Transverse colon (tissue), 4 donors: ENCODE measurements at regions of chr20 and their contacts with region 1.

Region 1: DNA sequence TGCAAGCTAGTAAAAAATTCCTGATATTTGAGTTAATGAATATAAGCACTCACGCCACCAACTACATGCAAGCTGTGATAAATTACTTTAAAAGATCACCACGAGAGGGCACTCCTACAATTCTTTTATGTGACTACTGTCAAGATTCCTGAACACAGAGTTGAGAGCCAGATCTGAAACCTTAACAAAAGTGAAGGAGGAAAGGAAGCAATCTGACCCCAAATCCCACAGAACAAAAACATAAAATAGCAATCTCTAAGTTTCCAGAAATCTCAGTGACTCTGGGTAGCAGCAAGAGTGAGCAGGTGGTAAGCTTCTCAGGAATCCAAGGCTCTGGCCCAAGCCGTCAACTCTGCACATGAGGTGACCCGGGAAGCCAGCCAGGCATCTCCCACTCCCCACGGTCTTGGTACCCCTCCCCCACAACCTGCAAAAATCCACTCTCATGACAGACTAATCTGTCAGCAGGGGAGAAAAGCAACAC is 55.1 kb downstream of the STAU1 start:
- DNase-seq: no peak
- H3K4me3 ChIP-seq: no peak overlapping the region
- H3K27ac ChIP-seq: peak overlapping the region in 2 of 4 donors; percentile 9 to 11
- H3K4me1 ChIP-seq: peaks cover 0 to 7% (median 5%) of the 10 kb centered on the region in 4 donors
- H3K27me3 ChIP-seq: no peaks in the 10 kb centered on the region
- CTCF ChIP-seq: peak; percentile 54 to 67 (median 58)
- EP300 ChIP-seq: no peak
- POLR2A ChIP-seq: no peak

Region 2: GRCh38 chr20:49046087-49046900 is 86.7 kb before region 1 on chr20 and contains the start of gene CSE1L:
- in situ Hi-C with region 1: loop called in 1 of 4 experiments (anchors 25 kb)
- intact Hi-C with region 1: no loop called
- DNase-seq: peak; percentile 96
- H3K4me3 ChIP-seq: peak within 1 kb of the TSS; percentile 76 to 93 (median 92)
- H3K27ac ChIP-seq: peak within 1 kb of the TSS; percentile 94 to 98 (median 96)
- H3K4me1 ChIP-seq: peaks cover 0 to 22% (median 8%) of the 10 kb centered on the region in 4 donors
- H3K27me3 ChIP-seq: no peaks in the 10 kb centered on the region
- CTCF ChIP-seq: peak; percentile 20 to 86 (median 37)
- EP300 ChIP-seq: no peak
- POLR2A ChIP-seq: peak; percentile 88
- total RNA-seq, gene CSE1L: 11.5 to 27.0 (median 15.5) TPM

Region 3: DNA sequence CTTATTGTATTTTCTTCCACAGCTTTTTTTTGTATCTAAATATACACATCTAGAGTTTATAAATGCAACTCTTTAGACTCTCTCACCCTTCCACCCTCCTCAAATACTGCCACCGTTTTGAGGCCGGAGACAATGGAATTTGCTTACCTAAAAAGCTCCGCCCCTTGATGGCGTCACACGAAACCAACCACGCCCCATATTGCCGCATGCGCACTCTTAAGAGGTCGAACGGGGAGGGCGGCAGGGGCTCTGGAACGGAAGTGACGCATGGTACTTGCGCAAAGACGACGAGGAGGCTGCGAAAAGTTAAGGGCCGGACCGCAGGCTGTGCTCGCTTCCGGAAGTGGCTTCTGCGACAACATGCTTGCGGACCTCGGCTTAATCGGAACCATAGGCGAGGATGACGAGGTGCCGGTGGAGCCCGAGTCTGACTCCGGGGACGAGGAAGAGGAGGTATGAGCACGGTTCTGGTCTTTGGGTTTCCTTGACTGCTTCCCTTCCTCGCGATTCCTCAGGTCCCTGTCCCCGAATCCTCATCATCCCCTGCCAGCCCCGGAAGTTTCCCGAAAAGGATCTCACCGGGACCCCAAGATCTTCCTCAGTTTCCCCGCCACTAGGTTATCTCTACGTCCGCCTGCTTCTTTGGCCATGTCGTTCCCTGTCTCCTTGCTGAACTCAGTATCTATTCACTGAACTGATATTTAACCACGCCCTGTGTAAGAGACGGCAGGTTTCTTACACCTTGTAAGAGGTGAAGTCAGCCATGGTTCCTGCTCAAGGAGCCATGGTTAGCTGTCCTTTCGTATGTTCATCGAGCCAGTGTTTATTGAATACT is 86.3 kb after region 1 on chr20 and contains the start of gene DDX27:
- in situ Hi-C with region 1: loop called (anchors 5 to 10 kb)
- intact Hi-C with region 1: loop called (anchors 2 kb)
- DNase-seq: peak; percentile 99
- H3K4me3 ChIP-seq: peak within 1 kb of the TSS; percentile 62 to 92 (median 83)
- H3K27ac ChIP-seq: peak within 1 kb of the TSS; percentile 87 to 96 (median 93)
- H3K4me1 ChIP-seq: peaks cover 8 to 25% (median 19%) of the 10 kb centered on the region in 4 donors
- H3K27me3 ChIP-seq: no peaks in the 10 kb centered on the region
- CTCF ChIP-seq: no peak
- EP300 ChIP-seq: no peak
- POLR2A ChIP-seq: peak; percentile 88
- total RNA-seq, gene DDX27: 13.1 to 37.0 (median 24.8) TPM